Sigmoid colon (tissue), 7 donors: ENCODE measurements at regions of chr1 and their contacts with region 1.

Region 1: DNA sequence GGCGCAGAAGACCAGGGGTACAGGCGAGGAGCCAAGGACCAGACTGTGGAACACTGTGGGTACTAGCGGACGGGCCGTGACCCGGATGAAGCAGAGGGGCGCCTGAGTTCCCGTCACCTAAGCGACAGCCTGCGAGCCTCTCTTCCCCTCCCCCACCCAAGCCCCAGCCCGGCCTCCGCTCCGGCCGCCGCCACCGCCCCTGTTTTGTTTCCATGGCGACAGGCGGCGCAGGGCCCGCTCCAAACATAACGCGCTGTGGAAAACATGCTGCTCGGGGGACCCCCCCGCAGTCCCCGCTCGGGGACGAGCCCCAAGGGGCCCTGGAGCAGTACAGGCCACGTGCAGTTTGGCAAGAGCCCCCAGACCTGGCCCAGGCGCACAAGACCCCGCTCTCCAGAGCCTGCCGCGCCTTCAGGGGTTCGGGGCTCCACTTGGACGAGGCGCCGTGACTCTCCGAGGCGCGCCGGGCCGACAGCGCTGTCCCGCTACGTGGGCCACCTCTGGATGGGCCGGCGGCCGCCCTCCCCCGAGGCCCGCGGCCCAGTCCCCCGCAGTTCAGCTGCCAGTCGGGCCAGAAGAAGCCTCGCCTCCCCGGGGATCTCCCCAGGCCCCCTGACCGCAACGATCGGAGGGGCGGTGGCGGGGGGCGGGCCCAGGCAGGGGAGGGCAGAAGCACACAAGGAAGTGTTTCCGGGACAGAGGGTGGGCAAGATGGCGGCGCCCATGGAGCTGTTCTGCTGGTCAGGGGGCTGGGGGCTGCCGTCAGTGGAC is at the start of gene MTX1:
- DNase-seq: peak; percentile 96
- H3K4me3 ChIP-seq: peak within 1 kb of the TSS; percentile 49 to 86 (median 75)
- H3K27ac ChIP-seq: peak within 1 kb of the TSS; percentile 93 to 100 (median 98)
- H3K4me1 ChIP-seq: peaks cover 0 to 36% (median 30%) of the 10 kb centered on the region in 4 donors
- H3K27me3 ChIP-seq: no peaks in the 10 kb centered on the region
- CTCF ChIP-seq: no peak
- EP300 ChIP-seq: peak in 1 of 4 donors; percentile 51
- POLR2A ChIP-seq: peak in 1 of 2 donors; percentile 54
- total RNA-seq, gene MTX1: 15.5 to 29.8 (median 27.7) TPM

Region 2: DNA sequence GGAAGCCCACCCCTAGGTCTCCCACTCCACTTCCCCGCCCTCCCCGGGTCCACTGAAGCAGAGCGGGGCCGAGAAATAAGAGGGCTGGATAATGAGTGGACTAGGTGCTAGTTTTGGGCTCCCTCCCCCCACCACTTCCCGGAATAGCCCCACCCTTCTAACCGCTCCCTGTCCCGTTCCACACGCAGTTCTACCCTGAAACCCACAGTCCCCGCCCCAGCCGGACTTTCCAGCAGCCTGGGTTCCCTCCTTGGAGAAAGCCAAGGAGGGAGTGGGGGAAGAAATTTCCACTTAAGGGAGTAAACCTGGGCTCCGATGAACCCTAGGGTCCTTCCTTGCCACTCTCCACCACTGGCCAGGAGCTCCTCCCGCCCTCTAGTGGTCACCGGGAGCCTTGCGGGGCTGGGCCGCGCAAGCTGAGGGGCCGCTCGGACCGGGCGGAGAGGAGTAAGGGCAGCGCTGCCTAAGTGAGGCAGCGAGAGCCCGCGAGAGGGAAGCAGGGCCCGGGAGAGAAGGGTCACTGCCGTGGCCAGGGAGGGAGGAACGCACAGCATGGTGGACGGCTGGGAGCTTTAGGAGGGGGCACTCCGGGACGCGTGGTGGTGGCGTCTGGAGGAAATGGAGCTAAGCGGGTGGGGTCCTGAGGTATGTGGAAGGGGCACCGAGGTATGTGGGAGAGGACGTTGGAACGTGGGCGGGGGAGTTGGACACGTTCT is 15.3 kb before region 1 on chr1:
- intact Hi-C with region 1: loop called (anchors 1 kb)
- DNase-seq: peak; percentile 94
- H3K4me3 ChIP-seq: peak overlapping the region; percentile 47 to 69 (median 60)
- H3K27ac ChIP-seq: peak overlapping the region; percentile 90 to 97 (median 92)
- H3K4me1 ChIP-seq: peaks cover 0 to 42% (median 36%) of the 10 kb centered on the region in 4 donors
- H3K27me3 ChIP-seq: no peaks in the 10 kb centered on the region
- CTCF ChIP-seq: peak; percentile 96 to 98 (median 96)
- EP300 ChIP-seq: no peak
- POLR2A ChIP-seq: peak in 1 of 2 donors; percentile 43

Region 3: DNA sequence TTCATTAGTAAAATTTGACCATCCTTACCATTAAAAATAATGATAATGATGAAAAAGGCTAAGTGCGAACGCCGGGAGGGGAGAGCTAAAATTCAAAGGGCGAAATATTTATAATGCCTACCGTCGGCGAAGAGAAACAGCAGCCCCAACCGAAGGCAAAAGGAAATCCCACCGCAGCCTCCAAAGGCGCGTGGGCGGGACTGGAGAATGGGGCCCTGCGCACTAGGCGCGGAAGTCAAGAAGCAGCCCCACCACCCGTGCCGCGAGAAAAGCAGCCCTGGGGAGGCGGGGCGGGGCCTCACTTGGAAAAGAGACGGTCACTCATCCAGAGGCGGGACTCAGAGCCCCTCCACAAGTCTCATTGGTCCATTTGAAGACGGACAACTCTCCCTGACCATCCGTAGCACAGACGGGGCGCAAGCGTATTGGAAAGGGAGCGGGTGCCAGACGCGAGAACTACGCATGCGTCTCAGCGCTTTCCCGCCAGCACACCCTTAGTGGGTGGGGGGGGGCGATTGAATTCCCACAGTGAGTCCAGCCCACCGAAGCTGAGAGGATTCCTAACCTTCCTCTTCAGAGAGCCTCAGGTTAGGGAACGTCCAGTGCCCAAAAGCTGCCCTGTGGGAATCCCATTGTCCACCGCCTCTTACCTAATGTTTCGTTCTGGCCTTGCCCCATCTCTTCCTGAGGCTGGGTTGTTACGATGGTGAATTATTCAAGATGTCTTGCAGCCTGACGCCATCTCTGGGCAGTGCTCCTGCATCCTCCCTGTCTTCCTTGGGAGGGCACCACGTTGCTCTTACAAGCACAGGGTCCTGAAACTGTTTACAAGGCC is 18.8 kb after region 1 on chr1:
- intact Hi-C with region 1: loop called (anchors 2 kb)
- DNase-seq: peak; percentile 99
- H3K4me3 ChIP-seq: peak overlapping the region; percentile 28 to 63 (median 56)
- H3K27ac ChIP-seq: peak overlapping the region; percentile 85 to 93 (median 90)
- H3K4me1 ChIP-seq: peaks cover 0 to 48% (median 40%) of the 10 kb centered on the region in 4 donors
- H3K27me3 ChIP-seq: no peaks in the 10 kb centered on the region
- CTCF ChIP-seq: no peak
- EP300 ChIP-seq: no peak
- POLR2A ChIP-seq: peak; percentile 42 to 46

Region 4: DNA sequence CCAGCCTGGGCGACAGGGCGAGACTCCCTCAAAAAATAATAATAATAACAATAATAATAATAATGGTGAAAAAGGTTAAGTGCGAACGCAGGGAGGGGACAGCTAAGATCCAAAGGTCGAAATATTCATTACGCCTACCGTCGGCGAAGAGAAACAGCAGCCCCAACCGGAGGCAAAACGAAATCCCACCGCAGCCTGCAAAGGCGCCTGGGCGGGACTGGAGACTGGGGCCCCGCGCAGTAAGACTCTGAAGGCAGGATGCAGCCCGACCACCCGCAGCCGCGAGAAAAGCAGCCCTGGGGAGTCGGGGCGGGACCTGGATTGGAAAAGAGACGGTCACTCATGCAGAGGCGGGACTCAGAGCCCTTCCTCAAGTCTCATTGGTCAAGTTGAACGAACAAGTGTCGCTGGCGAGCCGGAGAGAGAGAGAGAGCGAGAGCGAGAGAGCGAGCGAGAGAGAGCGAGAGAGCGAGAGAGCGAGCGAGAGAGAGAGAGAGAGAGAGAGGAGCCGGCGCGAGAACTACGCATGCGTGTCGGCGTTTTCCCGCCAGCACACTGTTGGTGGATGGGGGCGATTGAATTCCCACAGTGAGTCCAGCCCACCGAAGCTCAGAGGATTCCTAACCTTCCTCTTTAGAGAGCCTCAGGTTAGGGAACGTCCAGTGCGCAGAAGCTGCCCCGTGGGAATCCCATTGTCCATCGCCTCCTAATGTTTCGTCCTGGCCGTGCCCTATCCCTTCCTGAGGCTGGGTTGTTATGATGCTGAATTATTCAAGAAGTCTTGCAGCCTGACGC is 35.8 kb after region 1 on chr1:
- intact Hi-C with region 1: loop called (anchors 5 kb)
- DNase-seq: peak; percentile 100
- H3K4me3 ChIP-seq: peak overlapping the region; percentile 56 to 70 (median 66)
- H3K27ac ChIP-seq: peak overlapping the region; percentile 87 to 96 (median 95)
- H3K4me1 ChIP-seq: peaks cover 7 to 43% (median 37%) of the 10 kb centered on the region in 4 donors
- H3K27me3 ChIP-seq: no peaks in the 10 kb centered on the region
- CTCF ChIP-seq: peak; percentile 17 to 94 (median 94)
- EP300 ChIP-seq: peak in 2 of 4 donors; percentile 37 to 67
- POLR2A ChIP-seq: peak; percentile 90 to 91

Region 5: DNA sequence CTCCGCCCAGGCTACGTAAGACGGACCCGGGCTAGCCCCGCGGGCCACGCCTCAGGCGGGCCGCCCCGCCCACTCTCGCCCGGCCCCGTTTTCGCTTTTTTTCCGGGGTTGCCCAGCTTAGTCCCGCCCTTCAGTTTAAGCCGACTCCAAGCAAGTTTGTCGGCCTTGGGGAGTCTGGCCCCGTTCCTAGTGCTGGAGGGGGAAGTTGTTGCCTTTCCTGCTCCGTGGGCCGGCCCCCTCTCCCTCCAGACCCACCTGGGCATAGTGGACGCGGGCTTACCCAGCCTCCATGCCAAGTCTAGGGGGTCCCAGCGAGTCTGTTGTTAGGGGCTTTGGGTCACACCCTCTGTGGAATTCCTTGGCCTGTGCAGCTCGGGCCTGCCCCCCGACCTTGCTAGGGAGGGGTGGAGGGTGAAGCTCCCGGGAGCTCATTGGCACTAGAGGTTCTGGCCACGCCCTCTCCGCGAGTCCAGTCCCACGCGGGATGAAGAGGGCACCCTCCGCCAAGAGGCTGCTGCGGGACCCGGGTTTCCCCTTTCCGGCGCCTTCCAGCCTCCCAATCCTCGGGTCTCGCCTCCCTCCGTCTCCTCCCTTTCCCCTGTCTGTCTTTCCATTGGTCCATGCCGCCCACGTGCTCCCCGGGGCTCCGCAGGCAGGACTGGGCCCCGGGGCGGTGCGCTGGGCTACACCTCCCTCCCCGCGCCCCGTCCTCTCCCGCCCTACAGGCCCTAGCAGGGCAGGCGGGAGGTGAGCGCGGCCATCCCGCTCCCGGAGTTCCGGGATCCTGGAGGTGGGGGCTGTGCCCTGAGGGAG is 115.3 kb after region 1 on chr1:
- intact Hi-C with region 1: loop called (anchors 1 kb)
- DNase-seq: peak; percentile 98
- H3K4me3 ChIP-seq: peak overlapping the region; percentile 66 to 91 (median 86)
- H3K27ac ChIP-seq: peak overlapping the region; percentile 95 to 100 (median 98)
- H3K4me1 ChIP-seq: peaks cover 0 to 51% (median 38%) of the 10 kb centered on the region in 4 donors
- H3K27me3 ChIP-seq: no peaks in the 10 kb centered on the region
- CTCF ChIP-seq: no peak
- EP300 ChIP-seq: peak in 1 of 4 donors; percentile 11
- POLR2A ChIP-seq: peak; percentile 54 to 94

Region 6: GRCh38 chr1:156821801-156822200 is 1613.1 kb after region 1 on chr1:
- intact Hi-C with region 1: no loop called
- DNase-seq: no peak
- H3K4me3 ChIP-seq: no peak overlapping the region
- H3K27ac ChIP-seq: no peak overlapping the region
- H3K4me1 ChIP-seq: no peaks in the 10 kb centered on the region
- H3K27me3 ChIP-seq: no peaks in the 10 kb centered on the region
- CTCF ChIP-seq: no peak
- EP300 ChIP-seq: no peak
- POLR2A ChIP-seq: no peak